Upper lobe of right lung (tissue), 1 donor: ENCODE measurements at regions of chr3 and their contacts with region 1.

Region 1: DNA sequence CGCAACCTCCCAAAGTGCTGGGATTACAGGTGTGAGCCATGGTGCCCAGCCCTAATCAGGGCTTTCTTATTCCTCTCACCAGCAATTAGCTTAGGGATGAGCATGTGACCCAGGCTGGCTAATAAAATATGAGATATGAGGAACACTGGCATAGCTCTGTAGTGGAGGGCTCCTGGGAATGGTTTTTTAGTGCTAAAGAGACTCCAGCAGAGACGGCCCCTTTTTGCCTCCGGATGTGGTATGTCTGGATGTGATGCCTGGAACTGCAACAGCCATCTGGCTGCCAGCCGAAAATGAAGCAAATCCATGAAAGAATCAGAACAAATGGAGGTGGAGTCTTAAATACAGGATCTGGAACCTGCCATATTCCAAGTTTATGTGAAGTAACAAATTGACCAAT is 69.1 kb upstream of the MAGI1 start:
- DNase-seq: no peak
- ATAC-seq: no peak
- H3K4me3 ChIP-seq: no peak overlapping the region
- H3K27ac ChIP-seq: no peak overlapping the region
- H3K4me1 ChIP-seq: no peaks in the 10 kb centered on the region
- H3K27me3 ChIP-seq: no peaks in the 10 kb centered on the region
- CTCF ChIP-seq: no peak

Region 2: DNA sequence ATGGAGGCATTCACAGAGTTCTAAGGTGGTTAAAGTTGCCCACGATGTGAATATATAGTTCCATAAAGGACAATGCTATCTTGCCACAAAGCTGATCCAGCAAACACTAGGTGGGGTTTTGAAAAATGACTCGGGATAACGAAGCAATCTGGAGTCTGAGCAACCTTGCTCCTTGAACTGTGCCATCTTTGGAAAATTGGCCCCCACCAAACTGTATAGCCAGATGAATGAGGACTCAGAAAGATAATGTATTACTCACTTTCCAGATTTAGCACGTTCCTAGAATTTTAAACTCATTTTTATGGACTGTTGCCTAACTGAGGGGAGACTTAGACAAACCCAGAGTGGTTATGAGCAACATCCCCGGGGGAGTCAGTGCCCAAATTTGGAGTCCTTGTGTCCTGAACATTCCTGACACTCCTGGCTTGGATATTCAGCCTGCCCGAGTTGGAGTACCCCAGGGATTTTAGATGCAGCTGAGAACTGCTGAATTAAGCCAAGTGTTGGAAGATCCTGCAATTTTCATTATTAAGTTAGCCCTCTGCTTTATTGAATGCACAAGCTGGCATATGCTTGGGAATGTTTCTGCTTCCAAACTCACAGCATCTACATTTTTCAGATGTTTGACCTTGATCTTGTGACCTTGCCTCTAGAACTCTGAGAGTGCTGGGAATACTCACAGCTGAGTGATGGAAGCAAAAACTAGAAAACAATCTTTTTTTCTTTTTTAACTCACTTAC is 60.4 kb before region 1 on chr3:
- intact Hi-C with region 1: loop called (anchors 10 kb)
- DNase-seq: no peak
- ATAC-seq: peak; percentile 37
- H3K4me3 ChIP-seq: no peak overlapping the region
- H3K27ac ChIP-seq: no peak overlapping the region
- H3K4me1 ChIP-seq: peaks cover 6% of the 10 kb centered on the region
- H3K27me3 ChIP-seq: no peaks in the 10 kb centered on the region
- CTCF ChIP-seq: no peak